PC-3 (cell line): ENCODE measurements at regions of chr7 and their contacts with region 1.

Region 1: DNA sequence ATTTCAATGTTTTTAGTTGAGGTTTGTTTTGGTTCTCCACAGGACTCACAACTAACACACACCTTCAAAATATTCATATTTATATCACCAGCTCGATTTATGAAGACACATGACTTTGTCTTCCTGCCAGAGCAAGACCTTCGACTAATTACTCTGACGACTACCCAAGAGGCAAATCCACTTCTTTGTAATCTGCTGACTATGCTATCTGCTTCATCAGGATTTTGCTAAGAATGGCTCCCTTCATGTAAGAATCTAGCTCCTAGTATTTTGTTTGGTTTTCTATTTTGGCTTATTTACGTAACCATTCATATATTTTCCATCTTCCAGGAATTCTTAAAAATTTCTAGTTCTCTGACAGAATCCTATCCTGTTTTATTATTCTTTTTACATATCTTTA is 93.0 kb downstream of the BRAF start:
- DNase-seq: no peak
- ATAC-seq: no peak
- H3K4me3 ChIP-seq: no peak overlapping the region
- H3K27ac ChIP-seq: no peak overlapping the region
- H3K4me1 ChIP-seq: no peaks in the 10 kb centered on the region
- H3K27me3 ChIP-seq: no peaks in the 10 kb centered on the region
- CTCF ChIP-seq: no peak

Region 2: GRCh38 chr7:140857048-140857447 is 25.3 kb after region 1 on chr7:
- CTCF ChIA-PET with region 1: no interaction called
- POLR2A ChIA-PET with region 1: no interaction called
- intact Hi-C with region 1: loop called (anchors 2 kb)
- DNase-seq: no peak
- ATAC-seq: no peak
- H3K4me3 ChIP-seq: no peak overlapping the region
- H3K27ac ChIP-seq: no peak overlapping the region
- H3K4me1 ChIP-seq: no peaks in the 10 kb centered on the region
- H3K27me3 ChIP-seq: no peaks in the 10 kb centered on the region
- CTCF ChIP-seq: no peak